ENCODE measurements at regions of chr3 and their contacts with region 1.

Region 1: GRCh38 chr3:14863333-14864100 is 44.8 kb downstream of the FGD5 start:
- DNase-seq: no peak
- ATAC-seq: no peak
- H3K4me3 ChIP-seq: no peak overlapping the region
- H3K27ac ChIP-seq: peak overlapping the region in 8 of 10 donors; percentile 17 to 86 (median 32)
- H3K4me1 ChIP-seq: peaks cover 13 to 54% (median 37%) of the 10 kb centered on the region in 9 donors
- H3K27me3 ChIP-seq: peaks cover 0 to 5% (median 0%) of the 10 kb centered on the region in 7 donors
- CTCF ChIP-seq: peak in 7 of 9 donors; percentile 23 to 48 (median 35)

Region 2: GRCh38 chr3:14803101-14803980 is 60.2 kb before region 1 on chr3:
- intact Hi-C with region 1: loop called in 1 of 10 experiments (anchors 5 kb)
- DNase-seq: peak in 1 of 2 donors; percentile 51
- ATAC-seq: peak; percentile 42 to 75 (median 55)
- H3K4me3 ChIP-seq: no peak overlapping the region
- H3K27ac ChIP-seq: peak overlapping the region; percentile 52 to 85 (median 73)
- H3K4me1 ChIP-seq: peaks cover 2 to 53% (median 41%) of the 10 kb centered on the region in 9 donors
- H3K27me3 ChIP-seq: peaks cover 0 to 10% (median 5%) of the 10 kb centered on the region in 7 donors
- CTCF ChIP-seq: peak in 1 of 9 donors; percentile 14

Measured in heart right ventricle (tissue), 16 donors.